Colonic mucosa (tissue), 4 donors: ENCODE measurements at regions of chr5 and their contacts with region 1.

Region 1: GRCh38 chr5:81851481-81852178 is 100.7 kb upstream of the SSBP2 start:
- DNase-seq: peak; percentile 97
- H3K4me3 ChIP-seq: peak overlapping the region; percentile 45
- H3K27ac ChIP-seq: peak overlapping the region; percentile 94
- H3K4me1 ChIP-seq: peaks cover 13% of the 10 kb centered on the region
- H3K27me3 ChIP-seq: no peaks in the 10 kb centered on the region
- CTCF ChIP-seq: no peak

Region 2: GRCh38 chr5:81425569-81425968 is 426.1 kb before region 1 on chr5:
- intact Hi-C with region 1: loop called (anchors 10 kb)
- DNase-seq: no peak
- H3K4me3 ChIP-seq: no peak overlapping the region
- H3K27ac ChIP-seq: no peak overlapping the region
- H3K4me1 ChIP-seq: no peaks in the 10 kb centered on the region
- H3K27me3 ChIP-seq: no peaks in the 10 kb centered on the region
- CTCF ChIP-seq: peak; percentile 55

Region 3: GRCh38 chr5:81751009-81751835 is 100.4 kb before region 1 on chr5 and contains the start of gene SSBP2:
- intact Hi-C with region 1: loop called (anchors 1 kb)
- DNase-seq: peak; percentile 100
- H3K4me3 ChIP-seq: peak within 1 kb of the TSS; percentile 64
- H3K27ac ChIP-seq: peak within 1 kb of the TSS; percentile 84
- H3K4me1 ChIP-seq: no peaks in the 10 kb centered on the region
- H3K27me3 ChIP-seq: no peaks in the 10 kb centered on the region
- CTCF ChIP-seq: no peak
- total RNA-seq, gene SSBP2: 11.1 to 28.0 TPM

Region 4: GRCh38 chr5:81787474-81788242 is 64.0 kb before region 1 on chr5:
- intact Hi-C with region 1: loop called (anchors 5 kb)
- DNase-seq: peak; percentile 63
- H3K4me3 ChIP-seq: no peak overlapping the region
- H3K27ac ChIP-seq: peak overlapping the region; percentile 10
- H3K4me1 ChIP-seq: no peaks in the 10 kb centered on the region
- H3K27me3 ChIP-seq: no peaks in the 10 kb centered on the region
- CTCF ChIP-seq: no peak

Region 5: DNA sequence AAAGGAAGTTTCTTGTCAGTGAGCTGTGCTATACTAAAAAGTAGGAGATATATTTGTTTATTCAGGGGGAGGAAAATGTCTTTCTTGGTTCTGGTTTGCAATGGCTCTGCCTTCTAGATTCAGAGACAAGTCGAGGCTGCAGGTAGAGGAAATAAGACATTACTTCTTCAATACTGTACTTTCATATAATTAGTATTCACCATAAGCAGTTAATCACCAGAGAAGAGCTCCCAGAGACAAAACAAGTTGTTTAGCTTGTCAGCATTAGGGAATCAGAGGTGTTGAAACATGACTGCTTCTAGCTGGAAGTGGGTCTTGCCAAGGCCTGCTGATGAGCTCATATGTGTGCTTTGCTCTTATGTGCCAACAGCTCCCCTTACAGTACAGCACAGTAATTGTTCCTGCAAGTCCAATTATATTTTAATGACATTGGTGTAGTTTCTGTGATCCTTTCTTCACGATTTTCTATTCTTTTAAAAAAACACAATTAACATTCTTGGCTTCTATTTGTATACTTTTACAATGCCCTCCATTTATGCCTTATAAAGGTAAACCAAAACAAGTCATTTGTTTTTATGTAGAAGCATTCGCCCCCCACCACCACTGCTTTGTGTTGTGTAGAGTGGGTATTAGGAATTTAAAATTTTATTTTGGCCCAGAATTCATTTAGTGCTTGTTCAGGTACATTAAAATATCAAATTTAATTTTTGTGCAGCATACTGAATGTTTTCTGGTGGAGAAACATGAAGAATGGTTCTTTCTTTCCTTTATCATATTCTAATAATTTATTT is 314.3 kb after region 1 on chr5:
- intact Hi-C with region 1: loop called (anchors 10 kb)
- DNase-seq: peak; percentile 49
- H3K4me3 ChIP-seq: no peak overlapping the region
- H3K27ac ChIP-seq: no peak overlapping the region
- H3K4me1 ChIP-seq: peaks cover 4% of the 10 kb centered on the region
- H3K27me3 ChIP-seq: no peaks in the 10 kb centered on the region
- CTCF ChIP-seq: peak; percentile 53

Region 6: DNA sequence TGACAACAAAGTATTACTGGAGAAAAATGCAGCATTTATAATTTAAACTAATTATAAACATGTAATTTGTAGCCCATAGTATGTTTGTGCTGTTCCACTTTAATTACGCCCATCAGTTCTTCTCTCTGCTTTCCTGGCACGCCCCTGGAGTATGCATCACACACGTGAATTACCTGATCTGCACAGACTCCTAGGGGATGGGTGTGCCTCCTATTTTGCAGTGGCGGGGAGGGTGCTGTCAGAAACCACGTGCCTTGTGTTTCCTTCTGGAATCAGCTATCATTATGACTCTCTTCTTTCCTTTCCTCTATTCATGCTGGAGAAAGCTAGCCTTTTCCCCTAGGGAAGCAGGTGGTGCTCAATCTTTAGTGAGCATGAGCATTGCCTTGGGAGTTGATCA is 383.3 kb after region 1 on chr5:
- intact Hi-C with region 1: loop called (anchors 10 kb)
- DNase-seq: peak; percentile 36
- H3K4me3 ChIP-seq: no peak overlapping the region
- H3K27ac ChIP-seq: no peak overlapping the region
- H3K4me1 ChIP-seq: no peaks in the 10 kb centered on the region
- H3K27me3 ChIP-seq: no peaks in the 10 kb centered on the region
- CTCF ChIP-seq: no peak